Sigmoid colon (tissue), 7 donors: ENCODE measurements at regions of chr14 and their contacts with region 1.

Region 1: DNA sequence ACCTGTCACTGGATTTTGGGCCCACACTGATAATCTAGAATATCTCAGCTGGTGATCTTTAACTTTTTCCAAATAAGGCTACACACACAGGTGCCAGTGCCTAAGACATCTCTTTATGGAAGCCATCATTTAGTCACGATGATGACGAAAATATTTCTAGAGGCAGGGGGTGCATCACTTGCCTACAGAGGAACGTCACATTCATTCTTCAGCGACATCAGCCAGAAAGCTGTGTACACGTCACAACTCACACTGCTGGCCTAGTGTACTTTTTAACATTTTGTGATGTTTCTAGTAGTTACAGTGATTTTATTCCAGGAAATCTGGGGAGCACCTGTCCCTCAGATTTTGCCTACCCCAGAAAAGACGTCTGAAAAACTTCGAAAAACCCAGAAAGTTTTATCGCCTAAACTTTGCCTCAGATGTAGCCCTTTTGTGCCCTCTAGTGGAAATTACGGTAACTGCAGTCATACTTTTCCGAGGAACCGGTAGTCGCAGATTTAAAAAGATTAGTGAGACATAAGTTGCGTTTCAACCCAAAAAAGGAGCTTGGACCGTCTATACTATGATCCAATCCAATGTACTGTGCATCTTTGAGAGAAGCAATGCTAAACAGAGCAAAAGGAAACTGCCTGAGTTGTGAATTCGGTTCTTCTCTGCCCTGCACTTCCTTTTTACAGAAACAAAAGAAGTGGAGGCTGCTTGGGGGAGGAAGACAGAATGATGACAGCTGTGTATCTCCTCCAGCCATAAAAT is 64.3 kb upstream of the STON2 start:
- DNase-seq: no peak
- H3K4me3 ChIP-seq: peak overlapping the region; percentile 22 to 44 (median 42)
- H3K27ac ChIP-seq: peak overlapping the region in 3 of 4 donors; percentile 3 to 41 (median 27)
- H3K4me1 ChIP-seq: no peaks in the 10 kb centered on the region
- H3K27me3 ChIP-seq: no peaks in the 10 kb centered on the region
- CTCF ChIP-seq: peak; percentile 82 to 89 (median 85)
- EP300 ChIP-seq: no peak
- POLR2A ChIP-seq: no peak

Region 2: DNA sequence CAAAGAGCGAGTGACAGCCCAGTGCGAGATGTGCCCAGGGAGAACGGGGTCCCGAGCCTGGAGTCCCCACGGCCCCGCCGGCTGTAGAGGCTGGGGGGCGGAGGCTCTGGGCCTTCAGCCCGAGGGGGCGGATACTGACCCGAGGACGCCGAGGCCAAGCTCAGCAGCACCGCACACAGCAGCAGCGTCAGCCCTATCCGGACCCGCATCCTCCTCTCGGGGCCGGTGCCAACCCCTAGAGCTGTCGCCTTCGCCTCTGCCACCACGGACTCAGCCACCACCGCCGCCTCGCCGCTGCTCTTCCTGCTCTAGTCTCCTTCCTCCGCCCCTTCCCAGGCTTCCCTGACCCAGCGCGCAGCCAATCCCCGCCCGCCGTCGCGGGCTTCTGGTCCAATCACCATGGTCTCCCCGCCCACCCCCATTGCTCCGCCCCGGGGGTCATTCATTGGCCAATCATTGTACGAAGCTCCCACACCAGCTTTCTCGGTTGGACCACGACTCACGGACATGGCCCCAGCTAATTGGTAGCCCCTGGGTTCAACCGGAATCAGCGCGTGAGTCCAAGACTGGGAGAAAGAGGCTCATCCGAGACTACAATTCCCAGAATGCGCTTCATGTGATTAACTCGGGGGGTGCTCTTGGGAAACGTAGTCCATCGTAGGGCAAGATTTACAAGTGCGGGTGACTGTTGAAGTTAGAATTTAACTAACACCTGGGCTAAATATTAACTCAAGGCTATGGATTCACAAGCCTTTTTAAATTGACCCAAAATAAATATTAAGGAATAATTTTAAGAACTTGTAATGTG is 69.3 kb after region 1 on chr14 and contains the start of gene SEL1L:
- intact Hi-C with region 1: loop called (anchors 10 kb)
- DNase-seq: peak; percentile 100
- H3K4me3 ChIP-seq: peak within 1 kb of the TSS; percentile 78 to 96 (median 93)
- H3K27ac ChIP-seq: peak within 1 kb of the TSS; percentile 70 to 84 (median 80)
- H3K4me1 ChIP-seq: peaks cover 0 to 49% (median 38%) of the 10 kb centered on the region in 4 donors
- H3K27me3 ChIP-seq: no peaks in the 10 kb centered on the region
- CTCF ChIP-seq: no peak
- EP300 ChIP-seq: no peak
- POLR2A ChIP-seq: peak; percentile 58 to 77
- total RNA-seq, gene SEL1L: 52.0 to 74.8 (median 54.8) TPM